ENCODE measurements at regions of chr20 and their contacts with region 1.

Region 1: DNA sequence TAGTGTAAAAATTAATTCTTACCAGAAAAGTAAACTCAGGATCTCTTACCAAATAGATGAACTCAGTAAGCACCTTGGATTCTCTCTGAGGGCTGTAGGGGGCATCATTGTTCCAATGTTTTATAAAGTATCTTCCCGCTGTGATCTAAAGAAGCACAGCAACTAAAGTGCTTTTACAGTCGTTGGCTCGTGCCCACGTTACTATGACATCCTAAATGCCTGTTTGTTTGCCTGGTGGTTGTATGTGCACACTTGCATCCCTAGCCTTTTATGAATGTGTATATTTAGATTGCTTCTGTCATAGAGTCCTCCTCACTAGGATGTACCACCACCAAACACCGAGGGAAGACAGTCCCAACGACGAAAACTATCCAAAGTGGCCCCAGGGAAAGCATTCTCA is 34.5 kb downstream of the SLX4IP start:
- DNase-seq: no peak

Region 2: DNA sequence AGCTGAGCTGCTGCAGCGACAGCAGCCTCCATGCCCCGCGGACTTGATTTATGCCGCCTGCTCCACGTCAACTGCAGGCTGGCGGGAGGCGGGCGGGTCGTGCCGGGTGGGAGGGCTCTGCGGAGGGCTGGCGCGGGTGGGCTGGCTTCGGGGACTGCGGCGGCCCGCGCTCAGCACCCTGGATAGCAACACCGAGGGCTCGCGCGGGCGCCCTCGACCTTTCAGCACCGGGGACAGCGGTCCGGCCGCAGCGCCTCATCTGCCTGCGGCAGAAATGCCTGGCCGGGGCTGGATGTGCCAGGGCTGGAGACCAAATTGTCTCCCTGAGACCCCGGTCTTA is 250.2 kb before region 1 on chr20:
- intact Hi-C with region 1: no loop called
- DNase-seq: no peak

Region 3: DNA sequence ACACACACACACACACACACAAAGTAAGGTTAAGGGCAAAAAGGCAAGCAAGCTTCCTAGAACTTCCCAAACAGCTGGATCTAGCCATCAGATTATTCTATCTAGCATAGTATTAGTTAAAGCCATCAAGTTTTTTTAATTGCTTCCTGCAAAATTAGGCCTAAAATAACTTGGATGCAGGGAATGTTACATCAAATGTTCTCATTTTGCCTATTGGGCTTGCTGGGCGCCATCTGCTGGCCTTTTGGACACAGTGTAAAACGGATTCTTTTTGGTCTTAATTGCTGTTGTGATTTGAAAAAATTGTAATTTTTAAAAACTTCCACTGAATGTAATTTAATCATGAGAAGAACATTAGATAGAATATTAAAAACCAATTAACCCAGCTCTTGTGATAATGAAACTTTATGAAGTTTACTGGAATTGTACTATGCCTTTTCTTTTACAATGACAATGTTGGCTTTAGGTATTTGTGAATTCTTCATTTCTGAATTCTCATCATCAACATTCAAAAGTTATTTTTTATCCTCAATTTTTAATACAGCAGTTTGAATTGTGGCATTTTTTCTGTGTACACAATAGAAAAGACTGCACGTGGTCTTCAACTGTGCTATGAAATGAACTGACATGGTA is 42.4 kb before region 1 on chr20:
- intact Hi-C with region 1: no loop called
- DNase-seq: no peak

Region 4: DNA sequence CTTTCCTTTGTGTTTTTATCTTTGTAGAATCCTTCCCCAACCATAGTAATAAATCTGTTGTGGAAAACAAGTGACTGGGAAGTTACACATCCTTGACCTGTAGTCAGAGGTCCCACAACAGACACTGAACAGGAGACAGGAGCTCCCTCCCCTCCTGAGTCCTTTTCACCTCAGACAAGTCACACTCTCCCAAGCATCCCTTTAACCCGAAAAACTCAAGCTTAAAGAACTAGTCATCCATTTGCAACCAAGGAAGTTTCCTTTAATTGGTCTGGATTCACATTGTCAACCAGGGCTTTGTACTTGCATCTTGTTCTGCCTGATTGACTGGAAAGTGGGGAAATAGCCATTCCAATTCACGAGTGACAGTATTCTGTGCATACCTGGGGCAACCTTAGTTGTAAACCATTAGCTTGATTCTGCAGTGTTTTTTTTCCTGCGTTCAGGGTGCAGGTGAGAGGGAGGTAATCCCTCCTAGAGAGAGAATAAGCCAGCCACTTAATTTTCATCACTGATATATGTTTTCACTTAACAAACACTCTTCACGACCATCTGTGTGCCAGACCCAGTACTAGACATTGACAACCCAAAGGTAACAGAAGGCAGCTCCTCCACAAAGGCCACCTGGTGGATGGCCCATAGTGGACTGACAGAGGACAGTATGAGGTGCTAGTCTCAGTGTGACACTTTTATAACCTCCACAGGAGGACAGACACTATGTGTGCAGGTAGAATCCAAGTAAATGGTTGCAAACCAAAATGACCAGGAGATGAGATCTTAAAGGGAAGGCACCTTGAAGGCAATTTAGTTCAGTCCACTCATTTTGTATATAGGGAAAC is 77.9 kb after region 1 on chr20:
- intact Hi-C with region 1: loop called (anchors 5 kb)
- DNase-seq: no peak

Measured in cardiac septum (tissue), 1 donor.